Activated CD4-positive, alpha-beta memory T cell treated with anti-CD3 and anti-CD28 coated beads for 36 hours (primary cell): ENCODE measurements at regions of chr12 and their contacts with region 1.

Region 1: DNA sequence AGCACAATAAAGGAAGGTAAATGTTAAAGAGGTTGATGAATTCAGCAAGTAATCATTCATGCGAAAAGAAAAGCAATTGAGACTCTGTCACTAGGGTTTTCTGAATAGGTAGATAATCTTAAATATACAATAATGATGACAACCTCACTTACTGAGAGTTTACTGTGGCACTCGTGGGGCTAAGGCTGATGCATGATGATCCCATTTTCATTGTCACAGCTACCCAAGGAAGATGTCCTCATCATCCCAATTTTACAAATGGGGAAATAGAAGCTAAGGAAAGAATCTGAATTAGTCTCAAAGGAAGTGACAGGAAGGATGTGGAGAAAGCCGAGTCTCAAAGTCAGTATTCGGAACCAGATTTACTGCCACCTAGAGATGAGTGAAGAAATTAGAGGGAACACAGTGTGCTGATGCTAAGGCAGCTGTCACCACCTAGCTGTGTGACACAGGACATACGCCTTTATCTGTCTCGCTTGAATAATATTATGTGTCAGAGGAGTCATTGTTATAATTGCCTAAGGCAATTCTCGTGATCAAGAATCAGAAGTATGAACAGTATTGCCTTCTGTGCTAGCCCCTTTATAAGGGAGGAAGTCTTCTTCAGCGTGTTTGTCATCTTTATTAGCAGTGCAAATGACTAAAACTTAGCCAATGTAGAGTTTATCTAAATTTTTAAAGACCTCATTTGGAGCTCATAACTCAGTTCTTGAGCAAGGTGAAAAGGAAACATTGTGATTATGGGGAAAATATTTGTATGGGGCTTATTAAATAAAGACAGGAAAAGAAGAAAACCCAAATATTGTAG is 63.2 kb downstream of the ERGIC2 start:
- DNase-seq: peak; percentile 58
- H3K4me3 Mint-ChIP-seq: no peak overlapping the region
- H3K27ac Mint-ChIP-seq: no peak overlapping the region
- H3K4me1 Mint-ChIP-seq: peaks cover 8% of the 10 kb centered on the region
- H3K27me3 Mint-ChIP-seq: no peaks in the 10 kb centered on the region

Region 2: DNA sequence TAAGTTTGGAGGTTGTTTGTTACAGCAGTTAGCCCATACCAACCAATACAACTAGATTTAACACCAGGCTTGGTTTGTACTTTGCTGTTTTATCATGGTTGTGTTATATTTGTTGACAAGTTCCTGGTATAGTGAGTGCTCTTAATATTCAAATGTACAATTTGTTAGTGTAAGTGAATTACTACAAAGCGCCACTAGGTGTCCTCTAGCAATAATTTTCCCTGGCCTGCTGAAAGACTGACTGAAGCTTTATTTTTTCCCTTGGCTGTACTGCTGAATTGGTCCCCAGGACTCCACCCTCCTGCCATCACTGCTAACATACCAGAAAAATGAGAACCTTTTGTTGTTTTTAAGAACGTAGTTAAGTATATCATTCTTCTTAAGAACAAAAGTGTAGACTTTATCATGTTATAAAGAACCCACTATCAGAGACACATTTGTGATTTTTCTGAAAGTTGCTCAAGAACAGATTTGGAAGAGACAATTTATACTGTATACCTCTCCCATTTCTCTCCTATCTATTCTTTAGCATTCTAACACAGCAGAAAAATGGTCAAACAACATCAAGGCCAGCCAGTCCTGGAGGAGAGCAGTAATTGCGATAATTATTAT is 244.0 kb before region 1 on chr12:
- CTCF ChIA-PET with region 1: interaction called, 138 read pairs
- POLR2A ChIA-PET with region 1: no interaction called
- intact Hi-C with region 1: loop called (anchors 1 kb)
- DNase-seq: no peak
- H3K4me3 Mint-ChIP-seq: no peak overlapping the region
- H3K27ac Mint-ChIP-seq: no peak overlapping the region
- H3K4me1 Mint-ChIP-seq: no peaks in the 10 kb centered on the region
- H3K27me3 Mint-ChIP-seq: peaks cover 21% of the 10 kb centered on the region

Region 3: GRCh38 chr12:29082522-29082921 is 235.2 kb before region 1 on chr12:
- CTCF ChIA-PET with region 1: interaction called, 138 read pairs
- POLR2A ChIA-PET with region 1: no interaction called
- intact Hi-C with region 1: no loop called
- DNase-seq: no peak
- H3K4me3 Mint-ChIP-seq: no peak overlapping the region
- H3K27ac Mint-ChIP-seq: peak overlapping the region; percentile 40
- H3K4me1 Mint-ChIP-seq: peaks cover 16% of the 10 kb centered on the region
- H3K27me3 Mint-ChIP-seq: peaks cover 25% of the 10 kb centered on the region

Region 4: DNA sequence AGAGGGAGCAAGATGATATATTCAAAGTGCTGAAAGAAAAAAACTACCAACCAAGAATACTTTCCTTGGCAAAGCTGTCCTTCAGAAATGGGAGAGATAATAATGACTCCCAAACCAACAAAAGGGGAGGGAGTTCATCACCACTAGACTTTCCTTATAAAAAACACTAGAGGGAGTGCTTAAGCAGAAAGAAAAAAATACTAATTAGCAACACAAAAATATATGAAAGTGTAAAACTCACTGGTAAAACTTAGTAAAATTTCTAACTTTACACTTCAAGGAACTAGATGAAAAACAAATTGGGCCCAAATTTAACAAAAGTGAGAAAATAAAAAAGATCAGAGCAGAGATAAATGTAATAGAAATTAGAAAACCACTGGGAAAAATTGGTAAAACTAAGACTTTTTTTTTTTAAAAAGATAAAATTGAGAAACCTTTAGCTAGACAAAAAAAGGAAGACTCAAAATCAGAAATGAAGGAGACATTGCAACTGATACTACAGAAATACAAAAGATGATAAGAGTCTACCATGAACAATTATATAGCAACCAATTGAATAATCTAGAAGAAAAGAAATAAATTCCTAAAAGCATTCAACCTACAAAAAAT is 229.0 kb before region 1 on chr12:
- CTCF ChIA-PET with region 1: interaction called, 81 read pairs
- POLR2A ChIA-PET with region 1: no interaction called
- intact Hi-C with region 1: loop called (anchors 1 kb)
- DNase-seq: no peak
- H3K4me3 Mint-ChIP-seq: no peak overlapping the region
- H3K27ac Mint-ChIP-seq: no peak overlapping the region
- H3K4me1 Mint-ChIP-seq: no peaks in the 10 kb centered on the region
- H3K27me3 Mint-ChIP-seq: peaks cover 19% of the 10 kb centered on the region

Region 5: DNA sequence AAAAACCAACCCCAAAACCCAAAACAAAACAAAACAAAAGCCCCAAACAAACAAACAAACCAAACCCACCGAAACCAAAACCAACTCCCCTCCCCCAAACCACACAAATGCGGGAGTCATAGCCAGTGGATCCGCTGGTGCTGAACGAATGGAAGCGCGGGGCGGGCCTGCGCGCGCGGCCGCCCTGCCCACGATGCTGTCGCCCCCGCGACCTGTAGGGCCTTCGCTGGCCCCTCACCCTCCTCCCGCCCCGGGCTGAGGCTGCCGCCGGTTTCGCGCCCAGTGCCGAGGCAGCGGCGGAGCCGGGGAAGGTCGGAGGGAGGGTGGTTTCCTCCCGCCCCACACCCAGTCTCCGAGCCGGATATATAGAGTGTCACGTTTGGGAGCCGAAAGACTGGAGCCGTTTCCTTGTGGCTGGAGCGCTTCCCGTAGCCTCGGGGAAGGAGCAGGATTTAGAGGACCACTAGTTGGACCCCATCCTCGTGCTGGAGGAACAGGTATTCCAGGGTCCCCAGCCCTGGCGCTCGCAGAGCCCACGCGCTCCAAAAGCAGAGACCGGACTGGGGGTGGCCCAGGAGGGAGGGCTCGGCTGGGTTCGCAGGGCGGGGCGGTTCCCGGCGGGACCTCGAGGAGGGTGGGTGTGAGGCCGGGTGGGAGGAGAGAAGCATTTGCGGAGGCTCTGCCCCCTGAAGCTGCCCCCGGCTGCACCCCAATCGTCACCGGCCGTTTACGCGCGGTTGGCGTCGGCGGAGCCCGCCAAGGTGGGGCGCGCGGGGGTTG is 168.7 kb before region 1 on chr12 and contains the start of gene FAR2:
- CTCF ChIA-PET with region 1: interaction called, 3 read pairs
- POLR2A ChIA-PET with region 1: no interaction called
- intact Hi-C with region 1: loop called (anchors 5 kb)
- DNase-seq: peak; percentile 61
- H3K4me3 Mint-ChIP-seq: peak within 1 kb of the TSS; percentile 92
- H3K27ac Mint-ChIP-seq: peak within 1 kb of the TSS; percentile 76
- H3K4me1 Mint-ChIP-seq: peaks cover 19% of the 10 kb centered on the region
- H3K27me3 Mint-ChIP-seq: peaks cover 1% of the 10 kb centered on the region
- total RNA-seq, gene FAR2: 9.2 to 9.9 TPM

Region 6: GRCh38 chr12:29241821-29242591 is 75.8 kb before region 1 on chr12:
- CTCF ChIA-PET with region 1: interaction called, 3 read pairs
- POLR2A ChIA-PET with region 1: no interaction called
- intact Hi-C with region 1: loop called (anchors 2 kb)
- DNase-seq: peak; percentile 35
- H3K4me3 Mint-ChIP-seq: no peak overlapping the region
- H3K27ac Mint-ChIP-seq: no peak overlapping the region
- H3K4me1 Mint-ChIP-seq: peaks cover 18% of the 10 kb centered on the region
- H3K27me3 Mint-ChIP-seq: no peaks in the 10 kb centered on the region

Region 7: DNA sequence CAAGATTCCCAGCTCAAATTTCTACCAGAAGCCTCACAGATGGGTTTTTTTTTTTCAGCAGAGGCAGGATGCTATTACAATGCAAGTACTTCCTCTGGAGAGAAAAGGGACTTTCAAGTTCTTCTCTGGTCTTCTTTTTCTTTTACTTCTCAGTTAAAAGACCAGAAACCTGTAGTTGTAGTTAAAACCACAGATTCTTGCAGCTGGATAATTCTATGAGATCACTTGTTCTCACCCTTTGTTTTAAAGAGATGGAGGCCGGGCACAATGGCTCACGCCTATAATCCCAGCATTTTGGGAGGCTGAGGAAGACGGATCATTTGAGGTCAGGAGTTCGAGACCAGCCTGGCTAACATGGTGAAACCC is 227.3 kb after region 1 on chr12:
- CTCF ChIA-PET with region 1: no interaction called
- POLR2A ChIA-PET with region 1: no interaction called
- intact Hi-C with region 1: no loop called
- DNase-seq: no peak
- H3K4me3 Mint-ChIP-seq: no peak overlapping the region
- H3K27ac Mint-ChIP-seq: no peak overlapping the region
- H3K4me1 Mint-ChIP-seq: no peaks in the 10 kb centered on the region
- H3K27me3 Mint-ChIP-seq: peaks cover 9% of the 10 kb centered on the region